ENCODE measurements at regions of chr17 and their contacts with region 1.

Region 1: GRCh38 chr17:44123356-44124117 is at the start of gene HDAC5:
- DNase-seq: peak; percentile 92 to 97 (median 95)
- ATAC-seq: peak; percentile 96
- H3K4me3 ChIP-seq: peak within 1 kb of the TSS; percentile 92 to 100
- H3K4me3 Mint-ChIP-seq: peak within 1 kb of the TSS; percentile 97
- H3K27ac ChIP-seq: peak within 1 kb of the TSS; percentile 66 to 82
- H3K27ac Mint-ChIP-seq: peak within 1 kb of the TSS; percentile 96
- H3K4me1 ChIP-seq: peaks cover 28% of the 10 kb centered on the region
- H3K4me1 Mint-ChIP-seq: peaks cover 45% of the 10 kb centered on the region
- H3K27me3 ChIP-seq: no peaks in the 10 kb centered on the region
- H3K27me3 Mint-ChIP-seq: no peaks in the 10 kb centered on the region
- CTCF ChIP-seq: peak; percentile 51
- total RNA-seq, gene HDAC5: 95.6 to 96.3 TPM

Region 2: DNA sequence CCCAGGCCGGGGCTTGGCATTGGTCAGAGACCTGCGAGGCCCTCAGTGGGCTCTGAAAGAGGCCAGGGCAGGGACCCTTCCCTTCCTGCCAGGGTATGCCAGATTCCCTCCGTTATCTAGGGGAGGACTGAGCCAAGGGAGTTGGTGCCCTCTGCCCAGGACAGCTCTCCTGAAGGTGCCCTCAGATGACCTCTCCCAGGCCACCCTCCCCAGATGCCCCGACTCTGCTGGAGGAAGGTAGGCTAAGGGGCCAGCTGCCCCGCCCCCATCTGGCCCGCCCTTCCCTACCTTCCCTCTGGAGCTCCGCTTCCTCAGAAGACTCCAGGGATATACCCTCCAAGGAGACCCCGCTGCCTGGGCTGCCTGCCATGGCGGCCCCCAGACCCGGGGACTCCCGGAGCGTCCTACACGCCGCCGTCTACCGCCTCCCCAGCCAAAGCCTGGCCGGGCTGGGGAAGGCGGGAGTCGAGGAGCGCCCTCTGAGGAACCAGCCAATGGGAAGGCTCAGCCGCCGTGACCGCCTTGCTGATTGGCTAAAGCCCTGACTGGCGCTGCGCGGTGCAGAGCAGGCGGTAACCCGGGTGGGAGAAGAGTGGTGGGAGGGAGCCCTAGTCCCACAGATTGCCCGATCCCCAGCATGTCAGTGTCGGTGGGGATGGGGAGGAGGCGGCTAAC is 223.2 kb before region 1 on chr17:
- CTCF ChIA-PET with region 1: no interaction called
- POLR2A ChIA-PET with region 1: no interaction called
- intact Hi-C with region 1: loop called in 1 of 2 experiments (anchors 10 kb)
- DNase-seq: peak; percentile 55 to 84 (median 79)
- ATAC-seq: peak; percentile 99
- H3K4me3 ChIP-seq: peak overlapping the region; percentile 34 to 57
- H3K4me3 Mint-ChIP-seq: peak overlapping the region; percentile 81
- H3K27ac ChIP-seq: no peak overlapping the region
- H3K27ac Mint-ChIP-seq: no peak overlapping the region
- H3K4me1 ChIP-seq: peaks cover 6% of the 10 kb centered on the region
- H3K4me1 Mint-ChIP-seq: peaks cover 9% of the 10 kb centered on the region
- H3K27me3 ChIP-seq: no peaks in the 10 kb centered on the region
- H3K27me3 Mint-ChIP-seq: peaks cover 27% of the 10 kb centered on the region
- CTCF ChIP-seq: no peak

Region 3: GRCh38 chr17:44014437-44015172 is 108.9 kb before region 1 on chr17 and contains the start of gene TMEM101:
- CTCF ChIA-PET with region 1: no interaction called
- POLR2A ChIA-PET with region 1: interaction called, 6 read pairs
- intact Hi-C with region 1: loop called (anchors 2 to 5 kb)
- DNase-seq: peak; percentile 79 to 95 (median 90)
- ATAC-seq: peak; percentile 99
- H3K4me3 ChIP-seq: peak within 1 kb of the TSS; percentile 81 to 91
- H3K4me3 Mint-ChIP-seq: peak within 1 kb of the TSS; percentile 100
- H3K27ac ChIP-seq: peak within 1 kb of the TSS; percentile 51 to 55
- H3K27ac Mint-ChIP-seq: peak within 1 kb of the TSS; percentile 95
- H3K4me1 ChIP-seq: peaks cover 11% of the 10 kb centered on the region
- H3K4me1 Mint-ChIP-seq: peaks cover 10% of the 10 kb centered on the region
- H3K27me3 ChIP-seq: no peaks in the 10 kb centered on the region
- H3K27me3 Mint-ChIP-seq: no peaks in the 10 kb centered on the region
- CTCF ChIP-seq: no peak
- total RNA-seq, gene TMEM101: 8.1 to 8.7 TPM

Region 4: DNA sequence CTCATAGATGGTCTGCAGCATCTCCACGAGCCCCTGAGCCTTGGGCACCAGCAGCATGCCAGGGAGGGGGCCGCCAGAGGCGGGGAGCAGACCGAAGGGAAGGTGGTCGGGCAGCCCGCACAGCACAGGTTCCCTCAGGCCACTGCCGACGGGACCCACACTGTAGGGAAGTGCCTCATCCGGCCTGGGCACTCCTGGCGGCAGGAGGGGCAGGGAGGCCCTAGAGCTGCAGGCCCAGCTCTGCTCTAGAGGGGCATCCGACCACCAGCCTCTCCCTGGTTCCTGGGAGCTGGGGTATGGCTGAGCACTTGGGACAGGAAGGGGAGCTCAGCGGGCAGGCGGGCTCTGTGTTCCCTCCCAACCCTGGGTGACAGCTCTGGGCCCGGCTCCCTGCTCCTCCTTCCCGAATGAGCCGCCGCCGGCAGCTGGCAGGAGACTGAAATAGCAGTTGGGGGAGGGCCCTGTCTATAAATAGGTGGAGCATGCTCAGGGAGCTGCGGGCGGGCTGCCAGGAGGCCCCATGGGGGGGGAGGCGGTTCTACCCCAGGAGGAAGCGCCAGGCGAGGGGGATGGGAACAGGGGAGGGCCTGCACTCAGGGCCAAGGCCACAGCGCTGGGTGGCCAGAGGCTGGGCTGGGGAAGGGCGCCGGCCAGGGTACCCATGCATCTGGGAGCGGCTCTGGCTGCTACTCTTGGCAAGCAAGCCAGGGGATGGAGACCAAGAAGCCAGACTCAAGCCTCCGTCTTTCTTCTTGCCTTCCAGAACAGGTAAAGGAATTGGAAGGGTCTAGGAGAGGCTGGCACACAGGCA is 12.5 kb before region 1 on chr17:
- CTCF ChIA-PET with region 1: interaction called, 6 read pairs
- POLR2A ChIA-PET with region 1: interaction called, 11 read pairs
- intact Hi-C with region 1: loop called in 1 of 2 experiments (anchors 1 kb)
- DNase-seq: peak; percentile 16 to 81 (median 62)
- ATAC-seq: peak; percentile 74
- H3K4me3 ChIP-seq: peak overlapping the region; percentile 2 to 35
- H3K4me3 Mint-ChIP-seq: peak overlapping the region; percentile 51
- H3K27ac ChIP-seq: no peak overlapping the region
- H3K27ac Mint-ChIP-seq: no peak overlapping the region
- H3K4me1 ChIP-seq: peaks cover 28% of the 10 kb centered on the region
- H3K4me1 Mint-ChIP-seq: peaks cover 31% of the 10 kb centered on the region
- H3K27me3 ChIP-seq: no peaks in the 10 kb centered on the region
- H3K27me3 Mint-ChIP-seq: no peaks in the 10 kb centered on the region
- CTCF ChIP-seq: no peak

Region 5: GRCh38 chr17:44186307-44187130 is 63.0 kb after region 1 on chr17 and contains the start of gene TMUB2:
- CTCF ChIA-PET with region 1: interaction called, 12 read pairs
- POLR2A ChIA-PET with region 1: interaction called, 8 read pairs
- intact Hi-C with region 1: loop called (anchors 1 kb)
- DNase-seq: peak; percentile 99 to 100 (median 100)
- ATAC-seq: peak; percentile 97
- H3K4me3 ChIP-seq: peak within 1 kb of the TSS; percentile 89 to 94
- H3K4me3 Mint-ChIP-seq: peak within 1 kb of the TSS; percentile 100
- H3K27ac ChIP-seq: peak within 1 kb of the TSS; percentile 99
- H3K27ac Mint-ChIP-seq: peak within 1 kb of the TSS; percentile 100
- H3K4me1 ChIP-seq: peaks cover 30% of the 10 kb centered on the region
- H3K4me1 Mint-ChIP-seq: peaks cover 48% of the 10 kb centered on the region
- H3K27me3 ChIP-seq: no peaks in the 10 kb centered on the region
- H3K27me3 Mint-ChIP-seq: no peaks in the 10 kb centered on the region
- CTCF ChIP-seq: no peak
- total RNA-seq, gene TMUB2: 43.2 to 43.8 TPM

Region 6: DNA sequence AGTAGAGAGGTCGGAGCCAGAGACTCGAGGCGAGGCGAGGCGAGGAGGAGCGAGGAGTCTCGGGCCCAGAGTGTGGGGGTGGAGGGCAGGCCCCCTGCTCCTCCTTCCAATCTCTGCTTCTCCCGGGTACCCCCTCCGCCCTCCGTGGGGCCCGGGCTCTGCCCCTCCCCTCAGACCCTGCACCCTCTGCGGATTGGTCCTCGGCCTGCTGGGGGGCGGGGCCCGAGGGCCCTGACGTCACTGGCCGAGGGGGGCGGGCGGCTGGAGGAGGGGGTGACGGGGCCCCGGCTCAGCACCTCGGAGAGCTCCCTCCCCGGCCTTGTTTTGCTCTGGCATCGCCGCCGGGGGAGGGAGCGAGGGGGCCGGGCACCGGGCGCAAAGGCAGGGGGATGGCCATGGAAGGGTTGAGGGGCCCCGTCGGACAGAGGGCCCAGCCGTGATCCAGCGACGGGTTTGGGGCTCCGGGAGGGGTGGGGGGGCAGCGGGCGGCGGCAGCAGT is 184.8 kb after region 1 on chr17 and contains the start of gene RUNDC3A:
- CTCF ChIA-PET with region 1: no interaction called
- POLR2A ChIA-PET with region 1: no interaction called
- intact Hi-C with region 1: loop called in 1 of 2 experiments (anchors 5 kb)
- DNase-seq: peak; percentile 78 to 92 (median 87)
- ATAC-seq: peak; percentile 94
- H3K4me3 ChIP-seq: peak within 1 kb of the TSS; percentile 33 to 41
- H3K4me3 Mint-ChIP-seq: peak within 1 kb of the TSS; percentile 62
- H3K27ac ChIP-seq: no peak within 1 kb of the TSS
- H3K27ac Mint-ChIP-seq: no peak within 1 kb of the TSS
- H3K4me1 ChIP-seq: peaks cover 14% of the 10 kb centered on the region
- H3K4me1 Mint-ChIP-seq: peaks cover 19% of the 10 kb centered on the region
- H3K27me3 ChIP-seq: peaks cover 4 to 10% of the 10 kb centered on the region in 2 experiments
- H3K27me3 Mint-ChIP-seq: peaks cover 36% of the 10 kb centered on the region
- CTCF ChIP-seq: no peak
- total RNA-seq, gene RUNDC3A: 0.19 TPM in 1 of 2 experiments, not detected in the other

Region 7: DNA sequence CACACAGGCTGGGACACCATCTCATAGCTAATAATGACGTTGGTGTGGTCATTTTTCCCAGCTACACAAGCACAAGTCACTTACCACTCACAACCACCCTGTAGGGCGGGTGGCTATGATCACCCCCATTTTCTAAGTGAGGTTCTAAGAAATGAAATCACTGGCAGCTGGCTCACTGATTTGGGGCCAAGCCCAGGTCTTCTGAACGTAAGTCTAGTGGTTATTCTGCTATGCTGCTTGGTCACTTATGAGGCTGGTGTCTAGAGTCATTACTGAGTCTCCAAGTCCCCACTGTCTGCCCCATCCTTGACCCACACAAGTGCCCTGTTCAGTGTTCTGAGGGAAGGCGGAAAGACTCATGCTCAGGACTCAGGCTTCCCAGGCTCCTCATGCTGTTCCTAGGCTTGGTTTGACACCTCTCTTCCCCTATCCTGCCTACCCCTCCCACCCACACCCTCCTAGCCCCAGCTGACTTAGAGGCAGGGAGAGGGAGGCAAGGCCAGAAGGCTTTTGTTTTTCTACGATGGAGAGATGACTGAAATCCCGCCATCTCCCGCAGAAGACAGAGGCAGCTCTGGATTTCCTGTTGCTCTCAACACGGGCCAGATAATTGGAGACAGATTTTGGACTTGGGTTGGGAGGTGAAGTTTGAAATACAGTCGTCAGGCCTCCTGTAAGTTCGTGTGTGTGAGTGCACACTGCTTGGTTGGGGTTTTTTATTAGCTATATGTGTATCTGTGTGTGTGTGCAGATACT is 466.0 kb after region 1 on chr17:
- CTCF ChIA-PET with region 1: no interaction called
- POLR2A ChIA-PET with region 1: no interaction called
- intact Hi-C with region 1: no loop called
- DNase-seq: no peak
- ATAC-seq: no peak
- H3K4me3 ChIP-seq: no peak overlapping the region
- H3K4me3 Mint-ChIP-seq: no peak overlapping the region
- H3K27ac ChIP-seq: no peak overlapping the region
- H3K27ac Mint-ChIP-seq: no peak overlapping the region
- H3K4me1 ChIP-seq: no peaks in the 10 kb centered on the region
- H3K4me1 Mint-ChIP-seq: no peaks in the 10 kb centered on the region
- H3K27me3 ChIP-seq: peaks cover 0 to 3% of the 10 kb centered on the region in 2 experiments
- H3K27me3 Mint-ChIP-seq: peaks cover 11% of the 10 kb centered on the region
- CTCF ChIP-seq: no peak